ENCODE measurements at regions of chr6 and their contacts with region 1.

Region 1: GRCh38 chr6:161370880-161371279 is 97.0 kb upstream of the AGPAT4 start:
- DNase-seq: peak; percentile 52 to 66 (median 53)
- H3K4me3 ChIP-seq: no peak overlapping the region
- H3K27ac ChIP-seq: no peak overlapping the region
- H3K4me1 ChIP-seq: no peaks in the 10 kb centered on the region
- H3K27me3 ChIP-seq: no peaks in the 10 kb centered on the region
- CTCF ChIP-seq: peak; percentile 70 to 75 (median 71)
- EP300 ChIP-seq: no peak
- POLR2A ChIP-seq: no peak

Region 2: DNA sequence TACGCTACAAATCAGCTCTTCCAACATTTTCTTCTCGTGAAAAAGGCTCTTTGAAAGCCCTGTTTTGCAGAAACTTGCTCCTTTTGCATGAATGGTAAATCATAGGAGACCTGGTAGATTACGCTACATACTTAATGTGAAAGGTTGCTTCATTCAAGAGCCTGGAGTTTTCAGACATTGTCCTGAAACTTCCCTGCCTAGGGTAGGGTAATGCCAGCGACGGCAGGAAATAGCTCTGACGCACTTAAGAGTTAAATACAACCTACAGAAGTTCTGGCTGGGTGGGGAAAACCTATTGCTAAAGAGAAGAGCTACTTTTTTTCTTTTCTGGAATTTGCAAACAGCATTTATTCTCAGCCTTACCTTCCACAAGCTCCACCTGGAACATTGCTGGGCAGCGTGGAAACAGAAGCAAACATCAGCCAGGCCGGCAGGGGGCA is 851.3 kb before region 1 on chr6:
- intact Hi-C with region 1: loop called in 1 of 4 experiments (anchors 10 kb)
- DNase-seq: no peak
- H3K4me3 ChIP-seq: peak overlapping the region; percentile 63
- H3K27ac ChIP-seq: peak overlapping the region in 1 of 2 donors; percentile 73
- H3K4me1 ChIP-seq: no peaks in the 10 kb centered on the region
- H3K27me3 ChIP-seq: no peaks in the 10 kb centered on the region
- CTCF ChIP-seq: peak in 1 of 3 donors; percentile 80
- EP300 ChIP-seq: no peak
- POLR2A ChIP-seq: no peak

Region 3: GRCh38 chr6:160733050-160733646 is 637.7 kb before region 1 on chr6:
- intact Hi-C with region 1: loop called in 2 of 4 experiments (anchors 5 kb)
- DNase-seq: peak; percentile 18 to 39 (median 30)
- H3K4me3 ChIP-seq: no peak overlapping the region
- H3K27ac ChIP-seq: no peak overlapping the region
- H3K4me1 ChIP-seq: no peaks in the 10 kb centered on the region
- H3K27me3 ChIP-seq: no peaks in the 10 kb centered on the region
- CTCF ChIP-seq: peak; percentile 21 to 42 (median 27)
- EP300 ChIP-seq: no peak
- POLR2A ChIP-seq: no peak

Region 4: DNA sequence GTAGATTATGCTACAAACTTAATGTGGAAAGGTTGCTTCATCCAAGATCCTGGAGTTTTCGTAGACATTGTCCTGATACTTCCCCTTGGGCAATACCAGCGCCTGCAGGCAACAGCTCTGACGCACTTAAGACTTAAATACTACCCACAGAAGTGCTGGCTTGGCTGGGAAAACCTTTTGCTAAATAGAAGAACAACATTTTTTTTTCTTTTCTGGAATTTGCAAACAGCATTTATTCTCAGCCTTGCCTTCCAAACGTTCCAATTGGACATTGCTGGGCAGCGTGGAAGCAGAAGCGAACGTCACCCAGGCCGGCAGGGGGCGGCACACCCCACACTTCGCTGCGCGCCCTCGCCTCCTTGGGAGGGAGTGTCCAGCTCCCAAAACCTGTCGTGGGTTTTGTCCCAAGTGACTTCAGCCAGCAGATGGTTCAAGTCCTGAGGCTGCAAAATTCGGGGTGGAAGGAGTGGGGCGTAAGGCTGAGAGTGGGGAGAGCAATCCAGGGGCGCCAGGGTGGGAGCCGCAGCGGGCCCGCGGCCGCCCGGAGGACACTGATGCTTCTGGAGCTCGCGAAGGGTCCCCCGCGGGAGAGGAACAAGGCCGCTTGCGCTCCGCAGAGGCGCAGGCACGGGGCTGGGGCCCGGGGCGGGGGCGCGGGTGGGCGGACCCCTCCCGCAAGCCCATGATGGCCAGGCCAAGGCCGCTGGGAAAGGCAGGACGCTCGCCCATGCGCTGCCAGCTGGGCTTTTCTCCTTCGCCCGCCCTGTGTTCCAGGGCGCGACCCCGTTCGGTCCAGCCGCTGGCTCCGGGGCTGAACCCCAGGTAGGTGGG is 440.1 kb before region 1 on chr6:
- intact Hi-C with region 1: loop called (anchors 2 to 5 kb)
- DNase-seq: peak; percentile 77 to 88 (median 84)
- H3K4me3 ChIP-seq: peak overlapping the region; percentile 68
- H3K27ac ChIP-seq: no peak overlapping the region
- H3K4me1 ChIP-seq: peaks cover 2% of the 10 kb centered on the region
- H3K27me3 ChIP-seq: no peaks in the 10 kb centered on the region
- CTCF ChIP-seq: peak; percentile 89 to 92 (median 91)
- EP300 ChIP-seq: no peak
- POLR2A ChIP-seq: peak; percentile 23

Region 5: GRCh38 chr6:160992061-160992979 is 378.6 kb before region 1 on chr6:
- intact Hi-C with region 1: loop called in 1 of 4 experiments (anchors 5 kb)
- DNase-seq: peak in 4 of 5 donors; percentile 51 to 65 (median 63)
- H3K4me3 ChIP-seq: peak overlapping the region; percentile 79
- H3K27ac ChIP-seq: peak overlapping the region; percentile 86 to 87
- H3K4me1 ChIP-seq: peaks cover 6% of the 10 kb centered on the region
- H3K27me3 ChIP-seq: no peaks in the 10 kb centered on the region
- CTCF ChIP-seq: peak in 1 of 3 donors; percentile 55
- EP300 ChIP-seq: no peak
- POLR2A ChIP-seq: no peak

Region 6: GRCh38 chr6:161101517-161101916 is 269.4 kb before region 1 on chr6:
- intact Hi-C with region 1: loop called in 3 of 4 experiments (anchors 5 to 10 kb)
- DNase-seq: no peak
- H3K4me3 ChIP-seq: no peak overlapping the region
- H3K27ac ChIP-seq: no peak overlapping the region
- H3K4me1 ChIP-seq: no peaks in the 10 kb centered on the region
- H3K27me3 ChIP-seq: no peaks in the 10 kb centered on the region
- CTCF ChIP-seq: no peak
- EP300 ChIP-seq: no peak
- POLR2A ChIP-seq: no peak

Region 7: DNA sequence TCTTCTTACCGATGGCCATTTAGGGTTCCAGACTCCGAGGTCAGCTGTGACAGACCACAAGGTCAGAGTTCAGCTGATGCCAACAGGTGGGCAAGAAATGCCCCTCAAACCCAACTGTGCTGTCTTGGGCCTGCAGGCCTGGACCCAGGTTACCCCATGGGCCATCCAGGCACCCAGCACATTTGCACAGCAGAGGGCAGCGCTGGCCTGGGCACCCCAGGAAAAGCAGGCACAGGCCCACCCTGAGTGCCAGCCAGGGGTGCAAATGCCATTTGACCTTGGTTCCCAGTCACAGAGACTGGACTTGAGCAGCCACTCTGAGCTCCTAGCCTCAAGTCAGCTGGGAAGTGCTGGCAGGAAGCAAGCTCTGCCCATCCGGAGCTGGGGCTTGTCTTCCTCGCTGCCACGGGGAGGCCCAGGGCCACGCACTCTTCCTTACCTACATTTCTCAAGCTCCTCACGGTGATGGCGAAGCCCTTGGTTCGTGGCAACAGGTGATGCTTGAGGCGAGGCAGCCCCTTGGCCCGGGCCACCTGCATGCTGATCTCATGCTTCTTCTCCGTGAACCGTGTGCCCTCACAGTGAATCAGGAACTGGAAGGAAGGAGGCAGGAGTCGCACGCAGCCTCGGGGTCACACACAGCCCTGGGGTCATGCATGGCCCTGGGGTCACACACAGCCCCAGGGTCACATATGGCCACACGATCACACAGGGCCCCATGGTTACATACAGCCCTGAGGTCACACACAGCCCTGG is 217.8 kb before region 1 on chr6:
- intact Hi-C with region 1: loop called in 1 of 4 experiments (anchors 10 kb)
- DNase-seq: no peak
- H3K4me3 ChIP-seq: no peak overlapping the region
- H3K27ac ChIP-seq: no peak overlapping the region
- H3K4me1 ChIP-seq: no peaks in the 10 kb centered on the region
- H3K27me3 ChIP-seq: no peaks in the 10 kb centered on the region
- CTCF ChIP-seq: peak in 2 of 3 donors; percentile 14 to 17
- EP300 ChIP-seq: no peak
- POLR2A ChIP-seq: no peak

Region 8: DNA sequence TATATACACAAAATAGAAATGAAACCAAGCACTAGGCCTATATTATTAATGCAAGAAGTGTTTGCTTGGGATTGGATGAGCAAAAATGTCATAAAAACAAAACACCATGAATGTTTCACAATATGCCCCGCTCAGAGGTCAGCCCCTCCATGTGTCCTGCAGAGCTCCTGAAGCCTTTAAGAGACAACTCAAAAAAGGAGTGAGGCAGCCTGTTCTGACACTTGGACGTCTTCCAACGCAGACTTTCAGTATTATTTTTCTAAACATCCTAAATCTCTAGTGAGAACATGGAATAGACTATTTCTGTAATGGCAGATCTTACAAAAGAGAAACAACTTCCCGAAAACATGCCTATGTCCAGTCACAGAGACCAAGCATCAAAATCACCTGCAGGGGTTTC is 1034.1 kb after region 1 on chr6:
- intact Hi-C with region 1: no loop called
- DNase-seq: peak in 1 of 5 donors; percentile 18
- H3K4me3 ChIP-seq: no peak overlapping the region
- H3K27ac ChIP-seq: no peak overlapping the region
- H3K4me1 ChIP-seq: no peaks in the 10 kb centered on the region
- H3K27me3 ChIP-seq: no peaks in the 10 kb centered on the region
- CTCF ChIP-seq: no peak
- EP300 ChIP-seq: no peak
- POLR2A ChIP-seq: no peak

Measured in ovary (tissue), 10 donors.